ENCODE measurements at regions of chr1 and their contacts with region 1.

Region 1: DNA sequence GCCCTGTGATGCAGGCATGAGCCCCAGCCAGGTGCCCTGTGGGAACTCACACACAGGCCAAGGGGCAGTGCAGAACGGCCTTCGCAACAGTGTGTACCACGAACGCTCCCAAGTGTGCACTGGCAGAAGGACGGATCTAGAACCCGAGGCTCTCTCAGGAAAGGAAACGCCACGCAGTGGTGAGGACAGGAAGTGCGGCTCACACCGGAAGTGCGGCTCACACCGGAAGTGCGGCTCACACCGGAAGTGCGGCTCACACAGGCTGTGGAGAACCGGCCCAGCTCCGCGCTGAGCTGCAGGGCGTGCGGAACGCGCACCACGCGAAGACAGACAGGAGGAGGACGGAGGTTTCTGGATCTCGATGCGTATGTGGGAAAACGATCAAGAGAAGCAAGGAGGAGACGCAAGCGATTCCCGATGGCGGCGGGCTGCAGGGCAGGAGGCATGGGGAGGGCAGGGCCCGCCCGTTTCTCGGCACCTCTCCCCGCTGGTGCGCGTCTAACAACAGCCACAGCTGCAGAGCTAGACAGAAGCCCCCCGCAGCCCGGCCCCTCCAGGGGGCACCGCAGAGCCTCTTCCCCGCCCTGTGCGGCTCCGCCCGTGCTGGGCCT is 35.9 kb upstream of the TMEM52 start:
- DNase-seq: no peak
- ATAC-seq: no peak; the same call in 1 of the 3 replicates
- H3K4me3 ChIP-seq: peak overlapping the region in 1 of 3 experiments; percentile 17; a peak in 1 of 6 replicates
- H3K27ac ChIP-seq: no peak overlapping the region
- H3K4me1 ChIP-seq: peaks cover 59% of the 10 kb centered on the region
- H3K27me3 ChIP-seq: peaks cover 0 to 19% of the 10 kb centered on the region in 2 experiments; a peak in 3 of 5 replicates
- CTCF ChIP-seq: peak; percentile 46
- EP300 ChIP-seq: no peak
- POLR2A ChIP-seq: no peak
- RAD21 ChIP-seq: no peak

Region 2: GRCh38 chr1:1919304-1920056 is 35.5 kb before region 1 on chr1:
- CTCF ChIA-PET with region 1: no interaction called
- POLR2A ChIA-PET with region 1: interaction called, 5 read pairs
- in situ Hi-C with region 1: no loop called
- intact Hi-C with region 1: loop called (anchors 1 kb)
- DNase-seq: peak; percentile 96
- ATAC-seq: peak; percentile 65
- H3K4me3 ChIP-seq: peak overlapping the region; percentile 49 to 75 (median 59); a peak in 5 of 6 replicates
- H3K27ac ChIP-seq: peak overlapping the region; percentile 70
- H3K4me1 ChIP-seq: peaks cover 65% of the 10 kb centered on the region
- H3K27me3 ChIP-seq: peaks cover 6 to 10% of the 10 kb centered on the region in 2 experiments; a peak in 4 of 5 replicates
- CTCF ChIP-seq: peak; percentile 31
- EP300 ChIP-seq: no peak
- POLR2A ChIP-seq: no peak
- RAD21 ChIP-seq: no peak

Region 3: GRCh38 chr1:1943834-1944570 is 10.9 kb before region 1 on chr1:
- CTCF ChIA-PET with region 1: interaction called, 5 read pairs
- POLR2A ChIA-PET with region 1: interaction called, 18 read pairs
- in situ Hi-C with region 1: no loop called
- intact Hi-C with region 1: no loop called
- DNase-seq: peak; percentile 61
- ATAC-seq: peak; percentile 77
- H3K4me3 ChIP-seq: peak overlapping the region; percentile 67 to 87 (median 67)
- H3K27ac ChIP-seq: peak overlapping the region; percentile 91
- H3K4me1 ChIP-seq: peaks cover 80% of the 10 kb centered on the region
- H3K27me3 ChIP-seq: no peaks in the 10 kb centered on the region
- CTCF ChIP-seq: peak; percentile 100
- EP300 ChIP-seq: no peak
- POLR2A ChIP-seq: no peak
- RAD21 ChIP-seq: peak; percentile 70

Measured in HepG2 (cell line).